Left ventricle myocardium inferior (tissue), 1 donor: ENCODE measurements at regions of chr10 and their contacts with region 1.

Region 1: DNA sequence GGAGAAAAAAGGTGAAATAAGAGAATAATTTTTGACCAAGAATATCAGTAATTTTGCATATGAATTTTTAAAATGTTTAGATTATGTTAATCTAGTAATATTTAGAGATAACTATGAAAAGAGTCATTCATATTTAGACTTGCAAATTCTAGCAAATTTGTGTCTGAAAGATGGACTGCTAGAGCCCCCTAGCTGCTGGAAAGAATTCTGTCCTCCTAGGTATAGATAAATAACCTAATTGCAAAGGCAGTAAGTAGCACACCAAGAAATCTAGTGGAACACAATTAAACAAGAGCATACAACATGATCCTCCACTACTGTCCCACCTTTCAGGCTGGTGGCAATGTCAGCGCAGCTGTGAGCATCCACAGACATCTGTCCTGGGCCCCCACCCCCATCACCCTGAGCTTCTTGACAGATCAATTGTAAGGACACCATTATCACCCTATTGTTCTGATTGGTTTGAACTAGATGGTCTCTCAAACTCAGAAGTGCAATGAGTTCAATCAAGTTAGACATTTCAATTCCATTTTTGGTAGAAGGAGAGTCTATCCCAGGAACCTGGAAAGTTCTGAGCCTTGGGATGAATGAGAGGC is 15.0 kb upstream of the GFRA1 start:
- DNase-seq: no peak
- H3K4me3 ChIP-seq: no peak overlapping the region
- H3K27ac ChIP-seq: no peak overlapping the region
- H3K4me1 ChIP-seq: no peaks in the 10 kb centered on the region
- H3K27me3 ChIP-seq: peaks cover 40% of the 10 kb centered on the region
- CTCF ChIP-seq: peak; percentile 79

Region 2: GRCh38 chr10:115829521-115830205 is 458.3 kb before region 1 on chr10:
- intact Hi-C with region 1: loop called (anchors 10 kb)
- DNase-seq: no peak
- H3K4me3 ChIP-seq: no peak overlapping the region
- H3K27ac ChIP-seq: no peak overlapping the region
- H3K4me1 ChIP-seq: no peaks in the 10 kb centered on the region
- H3K27me3 ChIP-seq: no peaks in the 10 kb centered on the region
- CTCF ChIP-seq: peak; percentile 49

Region 3: DNA sequence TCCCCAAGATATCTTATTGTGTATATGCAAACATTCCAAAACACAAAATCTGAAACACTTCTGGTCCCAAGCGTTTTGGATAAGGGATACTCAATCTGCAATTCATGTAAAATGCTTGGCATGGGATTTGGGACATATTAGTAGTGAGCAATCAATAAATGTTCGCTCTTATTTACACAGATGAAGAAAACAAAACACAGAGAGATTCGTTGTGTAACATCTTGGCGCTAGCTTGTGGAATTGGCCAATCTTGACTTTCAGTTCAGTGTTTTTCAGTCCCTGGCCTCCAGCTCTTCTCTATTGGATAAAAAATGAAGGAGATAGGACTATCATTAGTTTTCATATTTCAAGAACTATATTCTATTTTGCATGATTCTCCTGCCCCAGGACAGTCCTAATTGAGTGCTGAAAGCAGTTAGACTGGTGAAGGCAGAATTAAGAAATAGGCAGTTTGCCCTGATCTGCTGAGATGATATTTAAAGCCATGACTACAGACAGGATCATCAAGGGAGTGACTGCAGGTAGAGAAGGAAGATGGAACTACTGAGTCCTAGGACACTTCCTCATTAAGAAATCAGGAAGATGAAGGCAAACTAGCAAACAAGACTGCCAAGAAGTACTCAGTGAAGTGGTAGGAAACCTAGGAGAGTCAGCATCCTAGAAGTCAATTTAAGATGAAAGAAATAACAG is 141.4 kb after region 1 on chr10:
- intact Hi-C with region 1: no loop called
- DNase-seq: no peak
- H3K4me3 ChIP-seq: no peak overlapping the region
- H3K27ac ChIP-seq: no peak overlapping the region
- H3K4me1 ChIP-seq: no peaks in the 10 kb centered on the region
- H3K27me3 ChIP-seq: peaks cover 10% of the 10 kb centered on the region
- CTCF ChIP-seq: no peak